Right cardiac atrium (tissue), 5 donors: ENCODE measurements at regions of chr1 and their contacts with region 1.

Region 1: GRCh38 chr1:93304716-93305138 is 41.0 kb upstream of the DR1 start:
- DNase-seq: peak in 1 of 3 donors; percentile 15
- ATAC-seq: peak in 1 of 2 donors; percentile 67
- H3K4me3 ChIP-seq: no peak overlapping the region
- H3K27ac ChIP-seq: no peak overlapping the region
- H3K4me1 ChIP-seq: no peaks in the 10 kb centered on the region
- H3K27me3 ChIP-seq: no peaks in the 10 kb centered on the region

Region 2: GRCh38 chr1:93369734-93370133 is 65.0 kb after region 1 on chr1:
- intact Hi-C with region 1: no loop called
- DNase-seq: no peak
- ATAC-seq: no peak
- H3K4me3 ChIP-seq: no peak overlapping the region
- H3K27ac ChIP-seq: no peak overlapping the region
- H3K4me1 ChIP-seq: no peaks in the 10 kb centered on the region
- H3K27me3 ChIP-seq: no peaks in the 10 kb centered on the region

Region 3: GRCh38 chr1:93437976-93438605 is 133.4 kb after region 1 on chr1:
- intact Hi-C with region 1: loop called in 2 of 4 experiments (anchors 10 kb)
- DNase-seq: no peak
- ATAC-seq: peak in 1 of 2 donors; percentile 45
- H3K4me3 ChIP-seq: no peak overlapping the region
- H3K27ac ChIP-seq: no peak overlapping the region
- H3K4me1 ChIP-seq: no peaks in the 10 kb centered on the region
- H3K27me3 ChIP-seq: no peaks in the 10 kb centered on the region